ENCODE measurements at regions of chr5 and their contacts with region 1.

Region 1: DNA sequence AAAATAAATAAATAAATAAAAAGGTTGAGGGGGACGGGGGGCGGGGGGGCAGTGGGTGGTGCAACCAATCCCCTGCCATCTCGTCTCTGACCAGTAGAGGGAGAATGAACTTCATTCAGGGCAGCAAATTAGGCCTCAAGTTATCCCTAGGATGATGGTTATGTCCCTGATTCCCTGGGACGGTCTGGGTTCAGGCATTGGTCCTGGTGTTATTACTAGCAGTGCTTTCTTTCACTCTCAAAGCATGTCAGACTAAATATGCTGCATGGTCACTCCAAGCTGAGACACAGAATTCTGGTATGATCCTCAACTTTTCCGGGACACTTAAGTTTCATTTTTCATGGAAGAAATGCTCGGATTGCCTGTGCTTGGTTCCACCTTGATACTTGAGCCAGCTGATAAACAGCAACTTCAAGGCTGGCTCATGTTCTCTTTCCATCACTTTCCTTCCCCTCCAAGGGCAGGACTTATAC is 59.4 kb downstream of the DAP start:
- DNase-seq: no peak
- ATAC-seq: peak; percentile 35 to 37
- H3K4me3 ChIP-seq: no peak overlapping the region
- H3K27ac ChIP-seq: peak overlapping the region; percentile 79
- H3K4me1 ChIP-seq: peaks cover 8% of the 10 kb centered on the region
- H3K27me3 ChIP-seq: no peaks in the 10 kb centered on the region

Region 2: DNA sequence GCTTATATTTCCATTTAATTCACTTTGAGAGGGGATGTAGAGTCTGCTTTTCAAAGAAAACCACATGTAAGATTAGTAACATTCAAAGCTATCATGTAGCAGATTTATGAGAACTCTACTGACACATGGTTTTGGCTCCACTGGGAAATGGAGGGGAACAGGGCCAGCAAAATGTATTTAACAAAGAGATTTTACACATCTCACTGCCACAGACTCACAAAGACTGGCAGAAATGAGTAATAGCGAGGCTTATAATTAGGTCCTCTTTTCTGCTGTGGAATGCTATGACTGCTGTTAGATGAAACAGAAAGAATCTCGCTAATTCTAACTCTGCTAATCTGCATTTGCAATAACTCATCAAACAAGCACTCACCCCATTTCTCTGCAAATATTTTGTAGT is 54.9 kb after region 1 on chr5:
- intact Hi-C with region 1: loop called in 1 of 4 experiments (anchors 10 kb)
- DNase-seq: no peak
- ATAC-seq: no peak
- H3K4me3 ChIP-seq: no peak overlapping the region
- H3K27ac ChIP-seq: no peak overlapping the region
- H3K4me1 ChIP-seq: peaks cover 9% of the 10 kb centered on the region
- H3K27me3 ChIP-seq: no peaks in the 10 kb centered on the region

Region 3: GRCh38 chr5:10885026-10885425 is 183.4 kb after region 1 on chr5:
- intact Hi-C with region 1: no loop called
- DNase-seq: no peak
- ATAC-seq: no peak
- H3K4me3 ChIP-seq: no peak overlapping the region
- H3K27ac ChIP-seq: no peak overlapping the region
- H3K4me1 ChIP-seq: no peaks in the 10 kb centered on the region
- H3K27me3 ChIP-seq: no peaks in the 10 kb centered on the region